HAP-1 (cell line): ENCODE measurements at regions of chr1 and their contacts with region 1.

Region 1: DNA sequence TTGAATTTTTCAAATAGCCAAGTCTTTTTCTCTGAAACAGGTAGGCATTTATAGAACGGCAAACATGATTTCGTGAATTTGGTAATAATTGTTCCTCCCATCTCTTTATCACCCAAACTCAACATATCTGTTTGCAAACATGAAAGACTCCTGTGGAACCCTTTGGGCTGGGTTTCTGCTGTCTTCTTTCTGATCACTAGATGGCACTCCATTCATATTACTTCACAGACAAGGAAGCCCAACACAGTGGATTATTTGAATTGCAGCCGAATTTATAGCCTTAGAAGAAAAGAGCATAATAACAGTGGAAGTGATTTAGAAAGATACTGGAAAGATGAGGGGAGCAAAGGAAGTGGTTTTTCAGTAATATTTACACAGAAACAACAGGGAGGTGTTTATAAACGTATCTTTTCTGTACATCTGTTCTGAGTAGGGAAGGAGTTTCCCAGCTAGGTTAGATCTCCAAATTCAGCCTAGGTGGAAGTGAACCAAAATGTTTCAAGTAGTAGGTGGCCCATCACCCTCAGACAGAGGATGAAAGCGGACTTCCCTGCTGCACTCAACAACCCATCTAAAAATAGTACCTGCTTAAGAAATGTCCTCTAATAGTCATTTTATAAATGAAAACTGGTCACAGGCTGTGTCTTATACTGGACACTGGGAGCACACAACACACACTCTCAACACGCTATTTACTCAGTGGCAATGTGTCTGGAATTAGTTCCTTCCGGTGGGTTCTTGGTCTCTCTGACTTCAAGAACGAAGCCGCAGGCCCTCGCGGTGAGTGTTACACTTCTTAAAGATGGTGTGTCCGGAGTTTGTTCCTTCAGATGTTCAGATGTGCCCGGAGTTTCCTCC is 67.6 kb downstream of the MAP3K21 start:
- DNase-seq: peak; percentile 51 to 74
- H3K4me3 ChIP-seq: no peak overlapping the region
- H3K4me1 ChIP-seq: no peaks in the 10 kb centered on the region
- H3K27me3 ChIP-seq: peaks cover 13% of the 10 kb centered on the region

Region 2: DNA sequence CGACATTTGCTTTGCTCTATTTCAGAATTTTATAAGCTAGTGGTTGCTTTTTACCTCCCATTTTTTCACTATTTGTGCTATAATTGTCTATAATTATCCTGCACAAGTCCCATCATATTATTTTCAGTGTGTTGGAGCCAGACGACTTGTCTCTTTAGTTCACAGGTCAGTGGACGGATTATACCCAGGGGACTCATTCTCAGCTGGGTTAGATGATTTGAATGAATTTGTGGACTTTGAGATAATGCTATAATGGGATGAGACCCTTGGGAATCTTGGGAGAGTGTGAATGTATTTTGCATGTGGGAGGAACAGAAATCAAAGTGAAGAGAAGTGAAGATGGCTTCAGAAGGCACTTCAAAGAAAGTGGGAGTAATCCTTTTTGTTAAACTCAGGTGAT is 187.3 kb after region 1 on chr1:
- in situ Hi-C with region 1: no loop called
- DNase-seq: no peak
- H3K4me3 ChIP-seq: no peak overlapping the region
- H3K4me1 ChIP-seq: no peaks in the 10 kb centered on the region
- H3K27me3 ChIP-seq: no peaks in the 10 kb centered on the region

Region 3: DNA sequence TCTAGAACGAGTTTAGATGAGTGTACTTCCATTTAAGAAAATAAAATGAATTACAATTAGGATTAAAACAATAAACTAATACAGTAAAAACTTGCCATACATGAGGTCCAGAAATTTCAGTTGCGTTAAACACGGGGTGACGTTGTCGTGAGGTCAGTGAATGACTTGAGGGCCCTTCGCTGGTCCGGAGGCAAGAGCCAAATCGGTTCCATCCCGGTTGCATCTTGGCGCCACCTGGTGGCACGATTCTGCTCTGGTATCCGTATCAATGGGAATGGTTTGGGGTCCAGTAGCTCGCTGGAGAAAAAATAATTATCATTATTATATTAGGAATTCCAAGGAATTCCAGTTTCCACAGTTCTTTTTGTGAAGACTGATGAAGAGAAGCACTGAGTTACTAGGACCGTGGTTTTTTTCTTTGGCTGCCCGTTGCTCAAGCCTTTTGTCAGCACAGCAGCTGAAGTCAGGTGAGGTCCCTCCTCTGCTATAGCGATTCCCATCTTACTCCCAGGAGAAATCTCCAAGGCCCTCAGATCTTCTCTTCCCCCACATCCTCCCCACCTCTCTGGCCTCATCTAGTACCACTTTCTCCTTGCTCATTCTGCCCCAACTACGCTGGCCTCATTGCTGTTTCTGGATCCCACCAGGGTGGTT is 670.8 kb after region 1 on chr1:
- in situ Hi-C with region 1: loop called (anchors 10 kb)
- DNase-seq: peak; percentile 55 to 88
- H3K4me3 ChIP-seq: no peak overlapping the region
- H3K4me1 ChIP-seq: no peaks in the 10 kb centered on the region
- H3K27me3 ChIP-seq: no peaks in the 10 kb centered on the region